ENCODE measurements at regions of chr1 and their contacts with region 1.

Region 1: DNA sequence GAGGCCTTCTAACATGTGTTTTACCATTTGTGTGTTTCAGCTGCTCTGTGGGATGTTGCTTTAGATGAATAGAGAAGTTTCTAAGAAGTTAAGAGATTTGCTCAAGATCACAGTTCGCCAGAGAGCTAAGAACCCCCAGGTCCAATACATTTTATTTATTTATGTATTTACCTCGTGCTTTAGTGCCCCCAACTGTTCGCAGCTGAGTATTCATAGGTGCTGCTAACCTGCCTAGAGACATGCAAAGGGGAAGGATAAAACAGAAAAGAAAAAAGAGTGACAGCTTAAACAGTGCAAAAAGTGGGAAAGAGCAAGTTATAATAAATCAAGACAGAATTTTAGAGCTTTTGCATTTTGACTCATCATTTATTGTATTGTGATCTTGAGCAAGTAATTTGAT is 31.1 kb downstream of the NFYC start:
- DNase-seq: no peak
- ATAC-seq: peak; percentile 25; the same call in 1 of the 3 replicates
- H3K4me3 ChIP-seq: no peak overlapping the region
- H3K27ac ChIP-seq: no peak overlapping the region
- H3K4me1 ChIP-seq: no peaks in the 10 kb centered on the region; a peak in 1 of 5 replicates
- H3K27me3 ChIP-seq: no peaks in the 10 kb centered on the region
- CTCF ChIP-seq: peak in 2 of 3 experiments; percentile 29 to 33; a peak in 2 of 6 replicates
- EP300 ChIP-seq: no peak
- POLR2A ChIP-seq: no peak
- RAD21 ChIP-seq: peak in 1 of 2 experiments; percentile 38; a peak in 2 of 4 replicates

Region 2: DNA sequence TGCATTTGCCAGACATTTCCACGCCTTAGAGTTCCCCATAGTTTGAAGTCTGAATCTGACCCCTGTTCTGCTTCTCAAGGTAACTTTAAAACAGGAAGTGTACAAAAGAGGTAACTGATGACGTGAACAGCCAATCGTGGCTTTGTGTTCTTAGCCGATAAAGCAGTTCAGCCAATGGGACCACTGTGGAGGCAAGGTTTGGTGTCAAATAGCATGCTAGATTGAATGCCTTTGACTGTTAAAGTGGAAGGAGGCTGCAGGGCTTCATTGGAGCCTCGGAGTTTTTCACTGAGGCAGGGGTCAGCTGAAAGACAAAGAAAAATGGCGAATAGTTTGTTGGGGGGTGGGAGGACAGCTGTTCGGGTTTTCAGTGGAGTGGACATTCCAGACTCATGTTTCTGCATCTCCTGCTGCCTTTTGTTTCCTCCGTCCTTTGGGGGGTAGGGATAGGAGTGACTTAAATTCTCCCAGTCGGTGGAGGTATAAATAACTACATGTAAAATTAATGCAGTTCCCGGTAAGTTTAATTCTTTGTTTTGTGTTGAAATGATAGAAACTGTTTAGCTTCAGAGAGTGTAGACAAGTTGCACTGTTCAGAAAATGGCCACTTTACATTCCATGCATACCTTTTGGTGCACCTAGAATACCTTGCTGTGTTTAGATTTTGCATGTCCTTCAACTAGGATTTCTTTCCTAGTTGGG is 13.4 kb before region 1 on chr1:
- CTCF ChIA-PET with region 1: no interaction called
- POLR2A ChIA-PET with region 1: interaction called, 17 read pairs
- in situ Hi-C with region 1: no loop called
- intact Hi-C with region 1: no loop called
- DNase-seq: peak; percentile 87 to 98 (median 92)
- ATAC-seq: peak; percentile 94
- H3K4me3 ChIP-seq: peak overlapping the region; percentile 49
- H3K27ac ChIP-seq: peak overlapping the region; percentile 90
- H3K4me1 ChIP-seq: peaks cover 0 to 41% of the 10 kb centered on the region in 2 experiments; a peak in 4 of 5 replicates
- H3K27me3 ChIP-seq: no peaks in the 10 kb centered on the region
- CTCF ChIP-seq: no peak
- EP300 ChIP-seq: 0 out of 2 replicates have a peak, but pooled peaks have one; percentile 23
- POLR2A ChIP-seq: peak; percentile 85
- RAD21 ChIP-seq: no peak; a peak in 1 of 4 replicates

Region 3: DNA sequence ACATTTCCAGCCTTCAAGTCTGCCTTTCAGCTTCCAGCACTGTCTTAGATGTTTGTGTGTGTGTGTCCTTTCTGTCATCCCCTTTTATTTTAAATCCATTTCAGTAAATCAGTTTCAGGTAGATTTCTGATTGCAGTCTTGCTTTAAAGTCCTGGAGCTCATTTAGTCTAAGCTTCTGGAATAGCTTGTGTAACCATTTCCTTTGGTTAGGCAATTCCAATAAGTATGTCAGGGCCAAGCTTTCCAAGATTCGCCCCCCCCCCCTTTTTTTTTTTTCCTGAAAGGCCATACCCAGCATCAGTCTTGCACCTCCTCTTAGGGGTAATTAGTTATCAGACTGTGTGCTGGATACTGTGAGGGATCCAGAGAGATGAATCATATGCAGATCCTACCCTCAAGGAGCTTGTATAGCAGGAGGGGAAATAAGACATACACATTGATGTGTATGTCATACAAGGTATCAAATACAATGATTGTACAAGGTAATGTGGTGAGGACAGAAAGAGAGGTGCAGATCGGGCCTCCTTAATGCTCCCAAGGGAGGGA is 10.2 kb after region 1 on chr1:
- CTCF ChIA-PET with region 1: no interaction called
- POLR2A ChIA-PET with region 1: interaction called, 13 read pairs
- in situ Hi-C with region 1: no loop called
- intact Hi-C with region 1: no loop called
- DNase-seq: no peak
- ATAC-seq: no peak
- H3K4me3 ChIP-seq: no peak overlapping the region
- H3K27ac ChIP-seq: no peak overlapping the region
- H3K4me1 ChIP-seq: peaks cover 3 to 5% of the 10 kb centered on the region in 2 experiments; a peak in 3 of 5 replicates
- H3K27me3 ChIP-seq: no peaks in the 10 kb centered on the region
- CTCF ChIP-seq: no peak
- EP300 ChIP-seq: no peak
- POLR2A ChIP-seq: no peak
- RAD21 ChIP-seq: no peak

Measured in K562 (cell line).